ENCODE measurements at regions of chr10 and their contacts with region 1.

Region 1: DNA sequence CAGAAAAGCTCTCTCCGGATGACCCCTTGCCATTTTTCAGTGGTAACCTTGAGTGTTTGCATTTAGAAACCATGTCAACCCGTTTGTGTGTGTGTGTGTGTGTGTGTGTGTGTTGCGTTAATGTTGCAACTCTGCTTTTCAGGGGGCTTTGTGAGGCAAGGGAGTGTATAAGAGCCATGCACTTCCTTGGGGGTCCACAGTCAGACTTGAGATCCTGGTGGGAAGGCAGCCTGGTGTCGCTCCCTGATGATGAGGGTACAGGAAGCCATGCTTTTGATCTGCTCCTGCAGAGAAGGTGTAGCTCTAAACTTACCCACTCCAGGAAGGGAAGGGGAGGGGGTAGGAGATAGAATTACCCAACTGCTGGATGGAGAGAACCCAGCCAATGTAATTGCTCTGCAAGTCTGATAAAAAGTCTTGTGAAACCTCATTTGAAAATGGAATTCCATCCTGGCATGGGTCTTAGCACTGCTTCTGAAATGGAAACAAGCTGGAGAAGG is 10.7 kb downstream of the GRK5 start:
- DNase-seq: no peak
- ATAC-seq: peak in 1 of 2 donors; percentile 35
- H3K4me3 ChIP-seq: no peak overlapping the region
- H3K27ac ChIP-seq: peak overlapping the region in 2 of 4 donors; percentile 33 to 40
- H3K4me1 ChIP-seq: peaks cover 7 to 13% of the 10 kb centered on the region in 2 donors
- H3K27me3 ChIP-seq: no peaks in the 10 kb centered on the region
- CTCF ChIP-seq: no peak
- POLR2A ChIP-seq: no peak

Region 2: DNA sequence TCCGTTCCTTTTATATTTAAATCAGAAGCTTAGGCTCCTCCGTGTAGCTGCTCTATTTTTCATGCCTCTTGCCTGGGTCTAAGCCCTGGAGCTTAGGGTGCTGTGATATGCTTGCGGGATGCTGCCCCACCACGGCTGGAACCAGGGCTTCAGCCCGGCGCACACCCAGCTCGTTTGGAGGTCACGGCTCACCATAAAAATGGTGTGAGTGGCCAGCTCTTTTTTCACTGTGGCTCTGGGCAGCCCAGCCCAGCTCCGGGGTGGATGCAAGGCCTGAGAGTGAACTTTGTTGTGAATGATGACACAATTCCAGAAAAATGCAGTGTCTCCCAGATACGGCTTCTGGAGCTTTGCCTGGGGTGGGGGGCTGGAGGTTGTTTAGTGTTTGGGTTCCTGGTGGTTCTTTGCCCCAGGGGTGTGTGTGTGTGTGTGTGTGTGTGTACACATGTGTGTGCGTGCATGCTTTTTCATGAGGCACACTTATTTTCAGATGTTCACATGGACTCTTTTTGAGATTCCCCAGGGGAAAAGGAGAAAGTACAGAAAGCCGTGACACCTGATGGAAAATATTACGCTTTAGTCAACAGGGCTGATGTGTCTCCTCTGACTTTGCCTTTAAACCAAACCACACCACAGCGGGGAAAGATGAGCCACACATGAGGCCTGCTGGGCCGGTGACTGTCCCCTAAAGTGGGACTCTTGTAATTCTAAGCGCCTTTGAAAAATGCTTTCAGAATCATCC is 35.6 kb after region 1 on chr10:
- in situ Hi-C with region 1: no loop called
- intact Hi-C with region 1: loop called (anchors 5 kb)
- DNase-seq: peak; percentile 37 to 71
- ATAC-seq: peak; percentile 70 to 78
- H3K4me3 ChIP-seq: no peak overlapping the region
- H3K27ac ChIP-seq: peak overlapping the region; percentile 74 to 79 (median 78)
- H3K4me1 ChIP-seq: peaks cover 25 to 62% of the 10 kb centered on the region in 2 donors
- H3K27me3 ChIP-seq: no peaks in the 10 kb centered on the region
- CTCF ChIP-seq: no peak
- POLR2A ChIP-seq: peak in 1 of 2 donors; percentile 43

Region 3: DNA sequence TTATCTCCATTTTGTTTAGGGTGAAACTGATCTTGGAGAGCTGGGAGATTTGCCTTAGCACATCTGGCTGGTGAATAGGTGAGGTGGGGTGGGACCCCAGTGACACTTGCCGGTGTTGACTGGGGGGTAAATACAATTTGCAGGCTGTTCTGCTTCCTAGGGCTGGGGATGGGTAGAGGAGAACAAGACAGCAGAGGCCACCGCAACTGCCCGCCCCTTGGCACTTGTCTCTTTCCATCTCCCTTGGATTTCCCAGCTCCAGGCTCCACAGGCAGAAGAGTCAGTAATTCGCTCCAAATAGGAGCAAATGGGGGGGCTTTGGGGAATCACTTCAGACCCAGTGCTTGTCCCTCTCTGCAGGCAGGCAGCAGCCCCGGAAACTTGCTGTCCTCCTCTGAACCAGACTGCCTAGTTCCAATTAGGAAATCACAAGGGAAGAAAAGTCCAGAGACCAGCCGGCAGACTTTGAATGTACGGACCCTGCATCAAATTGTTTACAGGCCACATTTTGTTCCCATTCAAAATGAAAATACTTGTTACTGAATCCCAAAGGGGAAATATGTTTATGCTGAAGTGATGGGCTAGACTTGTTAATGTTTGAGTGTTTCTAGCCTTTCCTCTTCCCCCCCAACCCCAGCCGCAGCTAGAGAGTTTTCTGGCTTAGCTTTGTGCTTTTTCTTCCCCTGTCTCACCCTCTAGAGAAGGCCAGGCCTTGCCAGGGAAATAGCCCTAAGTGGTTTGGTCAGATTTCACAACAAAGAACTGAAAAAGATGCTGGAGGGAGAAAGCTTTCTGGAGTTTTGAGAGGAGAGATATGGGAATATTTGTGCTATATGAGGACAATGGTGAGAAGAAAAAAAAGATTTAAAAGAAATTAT is 497.8 kb after region 1 on chr10:
- in situ Hi-C with region 1: no loop called
- intact Hi-C with region 1: no loop called
- DNase-seq: no peak
- ATAC-seq: no peak
- H3K4me3 ChIP-seq: no peak overlapping the region
- H3K27ac ChIP-seq: peak overlapping the region in 2 of 4 donors; percentile 24 to 25
- H3K4me1 ChIP-seq: peaks cover 8 to 9% of the 10 kb centered on the region in 2 donors
- H3K27me3 ChIP-seq: no peaks in the 10 kb centered on the region
- CTCF ChIP-seq: no peak
- POLR2A ChIP-seq: no peak

Measured in gastrocnemius medialis (tissue), 4 donors.